ENCODE measurements at regions of chr14 and their contacts with region 1.

Region 1: GRCh38 chr14:54347997-54348611 is 48.7 kb upstream of the CDKN3 start:
- DNase-seq: peak; percentile 71
- H3K4me3 ChIP-seq: no peak overlapping the region
- H3K27ac ChIP-seq: no peak overlapping the region
- H3K4me1 ChIP-seq: no peaks in the 10 kb centered on the region
- CTCF ChIP-seq: peak; percentile 94

Region 2: DNA sequence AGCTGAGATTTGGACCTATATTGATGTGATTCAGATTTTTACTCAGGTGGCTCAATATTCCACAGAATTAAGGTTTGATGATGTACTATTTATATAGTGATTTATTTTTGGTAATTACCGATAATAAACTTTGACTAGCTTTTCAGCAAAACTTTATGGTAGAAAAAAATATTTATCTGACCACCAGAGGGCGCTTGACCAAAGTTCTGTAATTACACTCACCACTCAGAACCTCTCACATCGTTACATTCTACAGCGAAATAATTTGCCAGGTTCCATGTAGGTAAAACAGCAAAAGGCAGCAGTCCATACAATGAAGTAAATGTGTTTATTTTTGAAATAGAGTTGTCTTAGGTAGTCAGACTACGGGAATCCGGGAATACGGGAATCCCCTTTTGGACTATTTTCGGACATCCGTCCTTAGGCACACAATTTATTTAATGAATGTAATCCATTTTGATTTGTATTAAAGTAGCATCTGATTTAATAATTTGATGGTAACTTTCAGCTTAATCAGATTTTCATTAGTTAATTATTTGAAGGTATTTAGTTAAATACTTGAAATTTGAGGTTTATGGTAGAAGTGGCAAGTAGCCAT is 1052.0 kb before region 1 on chr14:
- CTCF ChIA-PET with region 1: no interaction called
- POLR2A ChIA-PET with region 1: no interaction called
- intact Hi-C with region 1: loop called (anchors 10 kb)
- DNase-seq: peak; percentile 57
- H3K4me3 ChIP-seq: no peak overlapping the region
- H3K27ac ChIP-seq: no peak overlapping the region
- H3K4me1 ChIP-seq: no peaks in the 10 kb centered on the region
- CTCF ChIP-seq: peak; percentile 93